ENCODE measurements at regions of chr2 and their contacts with region 1.

Region 1: GRCh38 chr2:214724741-214725140 is 84.7 kb downstream of the BARD1 start:
- DNase-seq: no peak
- H3K4me3 ChIP-seq: no peak overlapping the region
- H3K27ac ChIP-seq: no peak overlapping the region
- H3K4me1 ChIP-seq: no peaks in the 10 kb centered on the region
- H3K27me3 ChIP-seq: no peaks in the 10 kb centered on the region
- CTCF ChIP-seq: no peak
- EP300 ChIP-seq: no peak
- POLR2A ChIP-seq: no peak

Region 2: GRCh38 chr2:213251618-213252017 is 1473.1 kb before region 1 on chr2:
- intact Hi-C with region 1: loop called (anchors 5 kb)
- DNase-seq: no peak
- H3K4me3 ChIP-seq: no peak overlapping the region
- H3K27ac ChIP-seq: no peak overlapping the region
- H3K4me1 ChIP-seq: peaks cover 0 to 5% (median 1%) of the 10 kb centered on the region in 4 donors
- H3K27me3 ChIP-seq: peaks cover 0 to 4% (median 0%) of the 10 kb centered on the region in 4 donors
- CTCF ChIP-seq: peak; percentile 56 to 73 (median 65)
- EP300 ChIP-seq: no peak
- POLR2A ChIP-seq: no peak

Measured in esophagus muscularis mucosa (tissue), 4 donors.